ENCODE measurements at regions of chr4 and their contacts with region 1.

Region 1: DNA sequence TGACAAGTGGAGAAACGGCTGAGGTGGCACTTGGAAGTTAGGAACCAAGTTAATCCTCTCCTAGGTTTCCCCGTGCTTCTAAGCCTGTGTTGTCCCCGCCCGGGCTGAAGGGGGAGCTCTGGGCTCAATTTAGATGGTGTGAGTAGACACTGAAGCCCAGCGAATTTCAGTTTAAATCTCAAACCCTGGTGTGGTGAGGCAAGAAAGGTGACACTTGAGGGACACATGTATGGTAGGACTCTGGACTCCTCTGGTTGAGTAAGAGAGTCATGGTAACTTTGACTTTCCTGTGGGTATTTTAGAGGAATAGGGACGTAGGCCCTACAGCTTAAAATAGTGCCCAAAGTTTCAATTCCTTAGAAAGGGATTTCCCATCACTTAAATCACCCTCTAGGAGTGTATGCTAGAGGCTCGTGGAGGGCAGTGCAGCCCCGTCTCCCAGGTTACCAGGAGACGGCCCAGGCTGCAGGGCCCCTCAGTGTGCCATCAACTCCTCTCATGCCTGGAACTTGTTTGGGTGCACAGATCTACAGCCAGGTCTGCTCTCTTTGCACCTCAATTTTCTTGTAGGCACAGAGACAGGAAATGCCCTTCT is 24.0 kb downstream of the HAND2 start:
- DNase-seq: peak; percentile 36
- ATAC-seq: no peak
- H3K4me3 ChIP-seq: peak overlapping the region in 3 of 5 experiments; percentile 7 to 31 (median 21)
- H3K4me3 Mint-ChIP-seq: peak overlapping the region; percentile 76
- H3K27ac ChIP-seq: no peak overlapping the region
- H3K27ac Mint-ChIP-seq: no peak overlapping the region
- H3K4me1 ChIP-seq: peaks cover 51 to 57% of the 10 kb centered on the region in 2 donors
- H3K4me1 Mint-ChIP-seq: peaks cover 55% of the 10 kb centered on the region
- H3K27me3 ChIP-seq: peaks cover 0 to 100% (median 72%) of the 10 kb centered on the region in 4 experiments
- H3K27me3 Mint-ChIP-seq: peaks cover 88% of the 10 kb centered on the region
- CTCF ChIP-seq: peak; percentile 33

Region 2: GRCh38 chr4:173461170-173461569 is 44.9 kb before region 1 on chr4:
- CTCF ChIA-PET with region 1: no interaction called
- POLR2A ChIA-PET with region 1: no interaction called
- intact Hi-C with region 1: no loop called
- DNase-seq: no peak
- ATAC-seq: no peak
- H3K4me3 ChIP-seq: no peak overlapping the region
- H3K4me3 Mint-ChIP-seq: no peak overlapping the region
- H3K27ac ChIP-seq: no peak overlapping the region
- H3K27ac Mint-ChIP-seq: no peak overlapping the region
- H3K4me1 ChIP-seq: no peaks in the 10 kb centered on the region
- H3K4me1 Mint-ChIP-seq: no peaks in the 10 kb centered on the region
- H3K27me3 ChIP-seq: no peaks in the 10 kb centered on the region
- H3K27me3 Mint-ChIP-seq: peaks cover under 1% of the 10 kb centered on the region
- CTCF ChIP-seq: no peak

Region 3: GRCh38 chr4:173573286-173573685 is 67.3 kb after region 1 on chr4:
- CTCF ChIA-PET with region 1: no interaction called
- POLR2A ChIA-PET with region 1: no interaction called
- intact Hi-C with region 1: no loop called
- DNase-seq: no peak
- ATAC-seq: no peak
- H3K4me3 ChIP-seq: no peak overlapping the region
- H3K4me3 Mint-ChIP-seq: no peak overlapping the region
- H3K27ac ChIP-seq: no peak overlapping the region
- H3K27ac Mint-ChIP-seq: no peak overlapping the region
- H3K4me1 ChIP-seq: no peaks in the 10 kb centered on the region
- H3K4me1 Mint-ChIP-seq: no peaks in the 10 kb centered on the region
- H3K27me3 ChIP-seq: peaks cover 0 to 3% (median 0%) of the 10 kb centered on the region in 4 experiments
- H3K27me3 Mint-ChIP-seq: peaks cover 6% of the 10 kb centered on the region
- CTCF ChIP-seq: no peak

Region 4: GRCh38 chr4:173707658-173708419 is 201.8 kb after region 1 on chr4:
- CTCF ChIA-PET with region 1: no interaction called
- POLR2A ChIA-PET with region 1: no interaction called
- intact Hi-C with region 1: no loop called
- DNase-seq: no peak
- ATAC-seq: no peak
- H3K4me3 ChIP-seq: no peak overlapping the region
- H3K4me3 Mint-ChIP-seq: no peak overlapping the region
- H3K27ac ChIP-seq: no peak overlapping the region
- H3K27ac Mint-ChIP-seq: no peak overlapping the region
- H3K4me1 ChIP-seq: no peaks in the 10 kb centered on the region
- H3K4me1 Mint-ChIP-seq: no peaks in the 10 kb centered on the region
- H3K27me3 ChIP-seq: no peaks in the 10 kb centered on the region
- H3K27me3 Mint-ChIP-seq: no peaks in the 10 kb centered on the region
- CTCF ChIP-seq: no peak

Region 5: GRCh38 chr4:174058846-174059245 is 552.8 kb after region 1 on chr4:
- CTCF ChIA-PET with region 1: no interaction called
- POLR2A ChIA-PET with region 1: no interaction called
- intact Hi-C with region 1: no loop called
- DNase-seq: no peak
- ATAC-seq: no peak
- H3K4me3 ChIP-seq: no peak overlapping the region
- H3K4me3 Mint-ChIP-seq: no peak overlapping the region
- H3K27ac ChIP-seq: no peak overlapping the region
- H3K27ac Mint-ChIP-seq: no peak overlapping the region
- H3K4me1 ChIP-seq: no peaks in the 10 kb centered on the region
- H3K4me1 Mint-ChIP-seq: no peaks in the 10 kb centered on the region
- H3K27me3 ChIP-seq: no peaks in the 10 kb centered on the region
- H3K27me3 Mint-ChIP-seq: no peaks in the 10 kb centered on the region
- CTCF ChIP-seq: no peak

Region 6: GRCh38 chr4:174214101-174214878 is 708.3 kb after region 1 on chr4:
- CTCF ChIA-PET with region 1: no interaction called
- POLR2A ChIA-PET with region 1: no interaction called
- intact Hi-C with region 1: loop called (anchors 5 kb)
- DNase-seq: peak; percentile 48
- ATAC-seq: no peak
- H3K4me3 ChIP-seq: peak overlapping the region in 2 of 5 experiments; percentile 1 to 32
- H3K4me3 Mint-ChIP-seq: peak overlapping the region; percentile 58
- H3K27ac ChIP-seq: no peak overlapping the region
- H3K27ac Mint-ChIP-seq: no peak overlapping the region
- H3K4me1 ChIP-seq: peaks cover 38 to 61% of the 10 kb centered on the region in 2 donors
- H3K4me1 Mint-ChIP-seq: peaks cover 47% of the 10 kb centered on the region
- H3K27me3 ChIP-seq: peaks cover 2 to 90% (median 74%) of the 10 kb centered on the region in 4 experiments
- H3K27me3 Mint-ChIP-seq: peaks cover 85% of the 10 kb centered on the region
- CTCF ChIP-seq: no peak

Measured in B cell (primary cell).